ENCODE measurements at regions of chr21 and their contacts with region 1.

Region 1: GRCh38 chr21:38355992-38356797 is 99.4 kb downstream of the KCNJ15 start:
- DNase-seq: peak; percentile 82 to 85 (median 83)
- ATAC-seq: peak; percentile 90 to 97 (median 94)
- H3K4me3 ChIP-seq: no peak overlapping the region
- H3K27ac ChIP-seq: no peak overlapping the region
- H3K4me1 ChIP-seq: no peaks in the 10 kb centered on the region
- H3K27me3 ChIP-seq: no peaks in the 10 kb centered on the region
- CTCF ChIP-seq: peak; percentile 94 to 98 (median 95)
- POLR2A ChIP-seq: no peak

Region 2: DNA sequence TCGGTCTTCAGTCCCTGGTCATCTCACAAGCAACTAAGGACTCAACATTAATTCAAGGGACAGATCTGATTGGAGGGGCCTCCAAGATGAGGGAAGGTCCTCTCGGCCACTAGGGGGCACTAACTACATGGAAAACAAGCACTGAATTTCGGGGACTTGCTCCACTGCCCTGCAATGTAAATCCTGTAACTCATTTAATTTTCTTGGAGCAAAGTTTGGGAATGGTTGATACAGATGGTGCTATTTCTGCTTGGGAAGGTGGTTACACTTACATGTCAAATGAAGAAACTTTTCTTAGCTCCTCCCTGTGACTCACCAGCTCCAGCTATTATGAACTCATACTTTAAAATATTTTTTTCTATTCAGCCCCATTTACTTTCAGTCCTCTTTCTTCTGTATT is 196.8 kb before region 1 on chr21:
- intact Hi-C with region 1: loop called (anchors 5 kb)
- DNase-seq: peak in 2 of 3 donors; percentile 49 to 63
- ATAC-seq: peak; percentile 75 to 85 (median 84)
- H3K4me3 ChIP-seq: no peak overlapping the region
- H3K27ac ChIP-seq: no peak overlapping the region
- H3K4me1 ChIP-seq: no peaks in the 10 kb centered on the region
- H3K27me3 ChIP-seq: no peaks in the 10 kb centered on the region
- CTCF ChIP-seq: peak; percentile 74 to 89 (median 86)
- POLR2A ChIP-seq: no peak

Region 3: GRCh38 chr21:38219049-38219628 is 137.1 kb before region 1 on chr21:
- intact Hi-C with region 1: loop called (anchors 5 kb)
- DNase-seq: peak; percentile 64 to 81 (median 71)
- ATAC-seq: peak; percentile 98 to 100 (median 100)
- H3K4me3 ChIP-seq: no peak overlapping the region
- H3K27ac ChIP-seq: no peak overlapping the region
- H3K4me1 ChIP-seq: no peaks in the 10 kb centered on the region
- H3K27me3 ChIP-seq: no peaks in the 10 kb centered on the region
- CTCF ChIP-seq: peak; percentile 96 to 97 (median 97)
- POLR2A ChIP-seq: no peak

Measured in right lobe of liver (tissue), 6 donors.